ENCODE measurements at regions of chr9 and their contacts with region 1.

Region 1: DNA sequence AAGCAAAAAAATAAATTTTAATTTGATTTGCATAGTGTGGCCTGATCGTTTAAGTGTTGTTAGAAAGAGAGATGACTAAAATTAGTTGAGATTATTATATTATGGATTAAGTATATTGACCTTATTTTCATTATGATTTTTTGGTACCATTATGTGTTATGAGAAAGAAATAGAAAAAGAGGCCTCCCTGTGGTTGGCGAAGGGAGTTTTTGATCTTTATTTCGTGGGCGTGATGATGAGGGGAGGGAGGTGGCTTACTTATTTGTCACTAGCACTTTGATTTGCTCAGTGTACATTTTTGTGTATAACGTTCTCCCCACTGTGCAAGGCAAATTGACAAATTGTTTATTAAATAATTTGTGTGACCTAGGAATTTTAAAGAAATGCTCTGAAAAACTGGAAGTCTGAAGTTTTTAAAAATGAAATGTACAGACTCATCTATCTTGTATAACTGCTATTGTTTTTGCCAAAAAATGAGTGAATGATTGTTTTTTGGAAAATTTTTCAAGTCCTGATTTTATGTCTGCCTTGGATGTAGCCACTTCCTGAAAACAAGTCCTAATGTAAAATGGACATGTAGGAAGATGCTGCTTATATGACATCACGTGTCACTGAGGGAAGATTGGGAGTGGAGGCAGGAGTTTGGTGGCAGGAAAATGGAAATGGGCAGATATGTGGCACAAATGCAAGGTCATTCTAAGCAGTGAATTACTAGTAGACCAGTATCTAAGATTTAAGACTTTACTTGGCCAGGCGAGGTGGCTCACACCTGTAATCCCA is 3.0 kb downstream of the DAPK1 start:
- DNase-seq: no peak
- H3K4me3 Mint-ChIP-seq: no peak overlapping the region
- H3K27ac Mint-ChIP-seq: no peak overlapping the region
- H3K4me1 Mint-ChIP-seq: peaks cover 12% of the 10 kb centered on the region
- H3K27me3 Mint-ChIP-seq: peaks cover 51% of the 10 kb centered on the region

Region 2: GRCh38 chr9:87107072-87107471 is 393.6 kb before region 1 on chr9:
- intact Hi-C with region 1: no loop called
- DNase-seq: no peak
- H3K4me3 Mint-ChIP-seq: no peak overlapping the region
- H3K27ac Mint-ChIP-seq: no peak overlapping the region
- H3K4me1 Mint-ChIP-seq: no peaks in the 10 kb centered on the region
- H3K27me3 Mint-ChIP-seq: no peaks in the 10 kb centered on the region

Region 3: DNA sequence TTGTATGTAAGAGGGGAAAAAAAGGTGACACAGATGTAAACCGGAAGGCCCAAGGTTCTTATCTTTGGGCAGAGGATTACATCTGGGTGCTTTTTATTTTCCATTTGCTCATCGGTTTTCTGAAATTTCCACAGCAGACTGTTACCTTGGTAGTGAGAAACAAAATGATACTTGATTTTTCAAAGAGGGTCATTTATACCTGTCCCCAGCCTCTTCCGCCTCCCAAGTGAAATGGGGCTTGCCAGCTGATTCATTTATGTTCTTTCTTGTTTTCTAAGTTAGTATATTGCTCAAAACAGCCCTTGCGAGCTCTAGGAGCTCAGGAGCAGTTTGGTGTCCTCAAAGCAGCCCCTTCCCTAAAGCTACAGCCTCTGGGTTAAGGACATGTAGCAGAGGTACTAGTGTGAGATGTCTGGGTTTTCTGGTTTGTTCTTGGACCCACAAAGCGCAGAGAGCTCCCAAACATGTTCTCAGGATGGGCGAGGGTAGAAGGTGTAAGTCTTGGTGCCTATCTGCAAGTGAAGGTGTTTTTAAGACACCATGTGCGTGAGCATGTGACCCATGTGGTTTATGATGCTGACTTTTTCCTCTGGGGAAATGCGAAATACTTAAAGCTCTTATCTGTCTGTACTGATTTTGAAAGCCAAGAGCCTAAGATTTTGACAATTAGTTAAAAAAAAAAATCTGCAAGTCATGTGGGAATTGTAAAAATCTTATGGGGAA is 35.3 kb after region 1 on chr9:
- intact Hi-C with region 1: loop called (anchors 1 kb)
- DNase-seq: peak; percentile 66
- H3K4me3 Mint-ChIP-seq: no peak overlapping the region
- H3K27ac Mint-ChIP-seq: peak overlapping the region; percentile 89
- H3K4me1 Mint-ChIP-seq: peaks cover 5% of the 10 kb centered on the region
- H3K27me3 Mint-ChIP-seq: no peaks in the 10 kb centered on the region